H1 (cell line): ENCODE measurements at regions of chr10 and their contacts with region 1.

Region 1: DNA sequence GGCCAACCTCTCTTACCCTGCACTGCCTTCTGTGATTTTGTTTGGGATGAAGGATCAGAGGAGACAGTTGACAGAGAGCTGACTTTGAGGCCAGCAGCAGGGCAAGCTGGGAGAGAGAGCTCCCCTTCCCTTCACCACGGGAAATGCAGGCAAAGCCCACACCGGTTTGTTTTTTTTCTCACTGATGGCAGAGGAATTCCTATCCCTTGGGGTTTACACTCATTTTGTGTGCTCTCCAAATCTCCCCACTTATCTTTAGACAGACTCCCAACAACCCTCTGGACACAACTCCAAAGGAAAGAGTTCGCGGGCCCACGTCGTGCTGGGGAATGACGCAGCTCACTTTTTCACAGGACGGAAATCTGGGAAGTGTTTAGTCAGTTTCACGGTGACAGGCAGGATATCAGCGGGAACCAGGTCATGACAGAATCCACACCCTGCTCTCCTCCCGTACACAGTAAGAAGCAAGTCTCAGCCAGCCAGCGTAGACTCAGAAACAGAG is 68.3 kb upstream of the FAM171A1 start:
- DNase-seq: no peak
- H3K4me3 ChIP-seq: no peak overlapping the region
- H3K27ac ChIP-seq: no peak overlapping the region
- H3K4me1 ChIP-seq: peaks cover 0 to 3% (median 0%) of the 10 kb centered on the region in 4 experiments; a peak in 1 of 7 replicates
- H3K27me3 ChIP-seq: peaks cover 0 to 5% (median 3%) of the 10 kb centered on the region in 4 experiments; a peak in 2 of 7 replicates
- CTCF ChIP-seq: peak in 2 of 3 experiments; percentile 61 to 69; a peak in 3 of 4 replicates
- EP300 ChIP-seq: no peak
- POLR2A ChIP-seq: no peak
- RAD21 ChIP-seq: peak; percentile 22 to 24; a peak in 1 of 4 replicates

Region 2: DNA sequence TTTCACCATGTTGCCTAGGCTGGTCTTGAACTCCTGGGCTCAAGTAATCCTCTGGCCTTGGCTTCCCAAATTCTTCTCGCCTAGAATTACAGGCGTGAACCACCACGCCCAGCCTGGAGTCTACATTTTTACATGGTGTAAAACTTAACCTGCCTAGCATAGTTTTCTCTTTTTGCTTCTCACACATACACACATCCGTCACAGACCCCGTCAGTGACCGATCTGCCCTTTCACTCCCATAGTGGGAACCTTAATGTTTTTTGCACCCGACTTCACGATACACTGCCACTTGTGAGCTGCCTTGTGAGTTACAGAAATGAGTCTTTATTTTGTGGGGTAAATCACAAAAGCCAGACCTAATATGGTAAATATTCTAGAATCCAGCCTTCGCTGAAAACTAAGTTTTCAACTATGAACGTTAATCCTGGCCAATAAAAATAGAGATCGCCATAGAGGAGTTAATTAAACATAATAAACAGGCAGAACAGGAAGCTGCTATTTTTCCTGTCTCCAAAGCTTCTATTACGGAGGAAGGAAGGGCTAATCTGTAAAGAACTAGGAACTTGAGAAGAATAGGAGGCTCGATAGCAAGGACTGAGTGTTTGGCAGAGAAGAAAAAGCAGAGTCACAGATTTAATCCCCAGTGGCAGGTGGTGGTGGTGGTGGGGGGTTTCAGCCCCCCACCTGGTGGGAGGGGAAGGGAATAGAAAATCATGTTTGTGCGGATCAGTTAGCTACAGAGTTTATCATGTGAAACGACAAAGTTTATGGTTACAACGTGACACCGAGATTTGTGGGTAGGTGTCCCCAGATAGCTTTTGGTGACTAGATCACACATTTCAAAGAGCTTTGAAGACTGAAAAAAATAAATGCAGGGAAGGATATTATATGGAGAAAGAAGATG is 53.6 kb before region 1 on chr10:
- CTCF ChIA-PET with region 1: no interaction called
- POLR2A ChIA-PET with region 1: no interaction called
- DNase-seq: no peak
- H3K4me3 ChIP-seq: no peak overlapping the region
- H3K27ac ChIP-seq: no peak overlapping the region
- H3K4me1 ChIP-seq: 0 out of 7 replicates have a peak, but pooled peaks cover 0 to 2% (median 0%) of the 10 kb centered on the region in 4 experiments
- H3K27me3 ChIP-seq: no peaks in the 10 kb centered on the region
- CTCF ChIP-seq: no peak
- EP300 ChIP-seq: no peak
- POLR2A ChIP-seq: no peak
- RAD21 ChIP-seq: no peak

Region 3: DNA sequence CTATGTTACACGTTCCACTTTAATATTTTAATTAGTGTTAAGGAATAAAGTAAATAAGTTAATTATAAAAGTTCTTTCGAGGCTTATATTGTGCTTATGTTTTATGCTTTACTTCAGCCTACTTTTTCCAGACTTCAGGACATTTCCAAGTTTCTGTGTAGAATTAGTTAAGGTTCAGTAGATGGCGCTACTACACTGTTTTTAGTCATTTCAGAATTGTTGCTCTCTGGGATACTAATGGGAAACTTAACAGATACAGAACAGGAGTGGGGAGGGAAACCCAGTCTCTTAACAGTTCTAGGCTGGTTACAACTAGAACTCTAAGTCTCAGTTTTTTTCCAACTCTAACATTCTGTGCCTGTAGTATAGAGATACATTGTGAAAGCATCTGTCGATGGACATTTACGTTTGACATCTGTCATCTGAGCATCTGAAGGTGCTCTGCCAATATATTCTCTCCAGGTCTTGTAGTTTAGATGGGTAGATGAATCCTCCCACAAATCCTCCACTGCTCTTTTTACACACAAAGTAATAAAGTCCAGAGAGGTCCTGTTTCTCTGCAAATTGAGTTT is 11.5 kb before region 1 on chr10:
- CTCF ChIA-PET with region 1: interaction called, 18 read pairs
- POLR2A ChIA-PET with region 1: no interaction called
- DNase-seq: no peak
- H3K4me3 ChIP-seq: no peak overlapping the region
- H3K27ac ChIP-seq: no peak overlapping the region
- H3K4me1 ChIP-seq: no peaks in the 10 kb centered on the region
- H3K27me3 ChIP-seq: no peaks in the 10 kb centered on the region
- CTCF ChIP-seq: peak in 2 of 3 experiments; percentile 57 to 58; a peak in 2 of 4 replicates
- EP300 ChIP-seq: no peak
- POLR2A ChIP-seq: no peak
- RAD21 ChIP-seq: peak; percentile 81 to 85